Activated naive CD4-positive, alpha-beta T cell treated with anti-CD3 and anti-CD28 coated beads, Interleukin-2, amount 10 ng/mL, durations not matched to agents 7 days and 5 days (primary cell): ENCODE measurements at regions of chr4 and their contacts with region 1.

Region 1: GRCh38 chr4:154506253-154506652 is 14.7 kb upstream of the DCHS2 start:
- DNase-seq: no peak
- H3K4me3 Mint-ChIP-seq: no peak overlapping the region
- H3K27ac Mint-ChIP-seq: no peak overlapping the region
- H3K4me1 Mint-ChIP-seq: no peaks in the 10 kb centered on the region
- H3K27me3 Mint-ChIP-seq: peaks cover 15% of the 10 kb centered on the region

Region 2: GRCh38 chr4:154332681-154333421 is 173.4 kb before region 1 on chr4:
- CTCF ChIA-PET with region 1: interaction called, 17 read pairs
- DNase-seq: peak; percentile 75
- H3K4me3 Mint-ChIP-seq: peak overlapping the region; percentile 69
- H3K27ac Mint-ChIP-seq: no peak overlapping the region
- H3K4me1 Mint-ChIP-seq: peaks cover 13% of the 10 kb centered on the region
- H3K27me3 Mint-ChIP-seq: peaks cover 31% of the 10 kb centered on the region